Sigmoid colon (tissue), 7 donors: ENCODE measurements at regions of chr12 and their contacts with region 1.

Region 1: DNA sequence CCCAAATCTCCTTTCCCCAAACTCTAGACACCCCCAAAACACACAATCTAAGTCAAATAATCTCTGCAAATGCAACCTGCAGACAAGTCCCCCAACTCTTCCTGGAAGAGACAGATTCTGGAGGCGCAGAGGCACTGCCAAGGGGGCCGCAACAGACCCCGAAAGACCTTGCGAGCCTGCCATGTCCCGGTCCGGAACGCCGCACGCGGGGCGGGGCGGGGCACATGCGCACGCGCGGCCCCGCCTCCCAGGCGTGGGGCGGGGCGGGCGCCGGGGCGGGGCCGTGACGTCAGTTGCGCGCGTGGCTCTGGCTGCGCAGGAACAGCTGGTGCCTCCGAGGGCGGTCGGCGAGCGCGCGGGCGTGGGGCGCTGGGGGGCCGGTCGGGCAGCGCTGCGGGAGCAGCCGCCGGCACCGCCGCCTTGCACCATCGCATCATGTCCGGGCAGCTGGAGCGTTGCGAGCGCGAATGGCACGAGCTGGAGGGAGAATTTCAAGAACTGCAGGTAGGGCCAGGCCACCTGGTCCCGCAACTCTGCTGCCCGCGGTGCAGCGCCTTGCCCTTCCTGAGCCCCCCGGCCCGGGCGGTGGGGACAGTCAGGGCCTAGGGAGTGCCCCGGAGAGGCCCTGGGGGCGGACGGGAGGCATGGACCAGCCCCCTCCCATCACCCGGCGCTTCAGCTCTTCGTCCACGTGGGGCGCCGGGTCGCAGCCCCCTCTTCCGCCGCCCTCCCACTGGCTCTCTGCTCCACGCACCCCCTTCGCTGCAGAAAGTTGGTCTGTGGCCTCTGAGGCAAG is at the start of gene TMEM120B:
- DNase-seq: peak; percentile 93
- H3K4me3 ChIP-seq: peak within 1 kb of the TSS; percentile 73 to 98 (median 78)
- H3K27ac ChIP-seq: peak within 1 kb of the TSS; percentile 82 to 91 (median 89)
- H3K4me1 ChIP-seq: peaks cover 0 to 25% (median 20%) of the 10 kb centered on the region in 4 donors
- H3K27me3 ChIP-seq: no peaks in the 10 kb centered on the region
- CTCF ChIP-seq: no peak
- EP300 ChIP-seq: no peak
- POLR2A ChIP-seq: peak; percentile 81 to 89
- total RNA-seq, gene TMEM120B: 2.9 to 8.9 (median 4.2) TPM

Region 2: DNA sequence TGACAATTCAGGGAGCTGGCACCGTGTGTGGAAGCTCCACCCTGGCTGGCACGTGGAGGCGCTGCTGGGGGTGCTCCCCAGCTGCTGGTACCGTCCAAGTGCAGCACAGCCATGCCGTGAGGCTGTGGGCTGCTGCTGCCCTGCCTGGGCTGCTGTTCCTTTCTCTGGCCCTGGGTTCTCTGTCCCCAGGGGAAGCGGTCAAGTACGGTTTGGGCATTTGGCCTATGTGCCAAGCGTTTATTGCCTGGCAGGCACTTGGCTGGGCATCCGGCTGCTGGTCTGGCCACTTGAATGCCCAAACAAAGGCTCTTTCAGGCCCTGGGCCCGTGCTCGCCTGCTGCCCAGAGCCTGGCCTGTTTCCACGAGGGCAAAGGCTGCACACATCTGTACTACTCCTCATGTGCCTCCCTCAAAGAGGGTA is 41.2 kb after region 1 on chr12:
- intact Hi-C with region 1: loop called (anchors 5 kb)
- DNase-seq: peak; percentile 89
- H3K4me3 ChIP-seq: no peak overlapping the region
- H3K27ac ChIP-seq: peak overlapping the region; percentile 43 to 77 (median 75)
- H3K4me1 ChIP-seq: peaks cover 0 to 19% (median 9%) of the 10 kb centered on the region in 4 donors
- H3K27me3 ChIP-seq: no peaks in the 10 kb centered on the region
- CTCF ChIP-seq: no peak
- EP300 ChIP-seq: no peak
- POLR2A ChIP-seq: no peak

Region 3: DNA sequence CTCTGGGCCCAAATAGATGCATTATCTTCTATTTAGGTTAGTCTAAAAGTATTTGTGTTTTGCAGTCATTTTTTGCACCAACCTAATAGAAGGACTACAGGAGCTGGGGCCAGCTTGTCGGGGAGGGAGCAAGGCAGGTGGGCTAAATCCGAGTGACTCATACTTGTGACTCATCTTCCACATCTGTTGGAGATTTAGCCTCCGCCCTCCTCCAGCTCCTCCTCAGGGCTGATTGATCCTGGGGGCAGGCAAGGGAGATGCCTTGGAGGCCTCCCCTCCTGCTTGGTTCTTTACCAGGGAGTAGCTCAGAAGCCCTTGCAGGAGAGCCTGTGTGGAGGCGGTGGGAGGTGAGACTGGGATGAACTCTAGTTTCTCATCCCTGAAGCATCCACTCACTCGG is 52.9 kb after region 1 on chr12:
- intact Hi-C with region 1: loop called (anchors 5 kb)
- DNase-seq: no peak
- H3K4me3 ChIP-seq: no peak overlapping the region
- H3K27ac ChIP-seq: peak overlapping the region in 3 of 4 donors; percentile 52 to 81 (median 67)
- H3K4me1 ChIP-seq: peaks cover 0 to 56% (median 49%) of the 10 kb centered on the region in 4 donors
- H3K27me3 ChIP-seq: no peaks in the 10 kb centered on the region
- CTCF ChIP-seq: no peak
- EP300 ChIP-seq: no peak
- POLR2A ChIP-seq: no peak